Activated naive CD4-positive, alpha-beta T cell treated with anti-CD3 and anti-CD28 coated beads for 36 hours (primary cell): ENCODE measurements at regions of chr2 and their contacts with region 1.

Region 1: GRCh38 chr2:73828818-73829570 is at the start of gene STAMBP:
- DNase-seq: peak; percentile 96
- H3K4me3 Mint-ChIP-seq: peak within 1 kb of the TSS; percentile 94
- H3K27ac Mint-ChIP-seq: peak within 1 kb of the TSS; percentile 94
- H3K4me1 Mint-ChIP-seq: peaks cover 43% of the 10 kb centered on the region
- H3K27me3 Mint-ChIP-seq: no peaks in the 10 kb centered on the region
- total RNA-seq, gene STAMBP: 80.5 to 80.7 TPM

Region 2: DNA sequence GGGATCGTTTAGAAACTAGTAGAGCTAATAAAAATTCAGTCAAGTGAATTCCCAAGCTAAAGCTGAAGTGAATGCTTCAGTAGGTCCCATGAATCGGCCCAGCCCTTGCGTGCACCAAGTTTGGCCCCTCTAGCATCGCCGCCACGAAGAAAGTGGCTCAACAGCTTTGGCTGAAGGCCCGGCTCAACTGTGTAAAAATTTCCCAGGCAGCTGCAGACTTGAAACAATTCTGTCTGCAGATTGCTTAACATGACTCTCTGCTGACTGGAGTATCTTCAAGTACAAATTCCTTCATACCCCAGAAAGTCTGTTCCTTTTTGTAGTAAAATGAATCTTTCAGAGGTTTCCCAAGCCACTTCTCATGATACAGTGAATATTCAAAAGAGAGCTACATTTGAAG is 410.7 kb before region 1 on chr2:
- CTCF ChIA-PET with region 1: no interaction called
- intact Hi-C with region 1: no loop called
- DNase-seq: no peak
- H3K4me3 Mint-ChIP-seq: no peak overlapping the region
- H3K27ac Mint-ChIP-seq: no peak overlapping the region
- H3K4me1 Mint-ChIP-seq: peaks cover 7% of the 10 kb centered on the region
- H3K27me3 Mint-ChIP-seq: no peaks in the 10 kb centered on the region

Region 3: DNA sequence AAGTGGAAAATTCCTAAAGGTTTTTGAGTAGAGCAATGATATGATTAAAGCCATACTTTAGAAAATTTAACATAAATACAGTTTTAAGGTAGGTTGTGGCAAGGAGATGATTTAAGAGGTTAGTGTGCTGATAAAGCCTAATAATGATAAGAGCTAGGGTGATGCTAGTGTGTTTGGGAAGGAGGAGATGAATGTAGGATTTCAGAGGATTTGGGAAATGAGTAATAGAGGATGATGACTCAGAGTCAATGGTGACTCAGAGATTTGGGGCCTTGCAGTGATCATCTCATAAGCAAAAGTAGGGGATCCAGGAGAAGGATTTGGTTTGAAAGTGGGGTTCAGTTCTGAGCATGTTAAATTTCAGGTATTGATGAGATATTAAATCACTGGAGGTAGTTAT is 23.0 kb after region 1 on chr2:
- CTCF ChIA-PET with region 1: interaction called, 8 read pairs
- intact Hi-C with region 1: loop called (anchors 1 kb)
- DNase-seq: no peak
- H3K4me3 Mint-ChIP-seq: no peak overlapping the region
- H3K27ac Mint-ChIP-seq: no peak overlapping the region
- H3K4me1 Mint-ChIP-seq: peaks cover 5% of the 10 kb centered on the region
- H3K27me3 Mint-ChIP-seq: no peaks in the 10 kb centered on the region

Region 4: DNA sequence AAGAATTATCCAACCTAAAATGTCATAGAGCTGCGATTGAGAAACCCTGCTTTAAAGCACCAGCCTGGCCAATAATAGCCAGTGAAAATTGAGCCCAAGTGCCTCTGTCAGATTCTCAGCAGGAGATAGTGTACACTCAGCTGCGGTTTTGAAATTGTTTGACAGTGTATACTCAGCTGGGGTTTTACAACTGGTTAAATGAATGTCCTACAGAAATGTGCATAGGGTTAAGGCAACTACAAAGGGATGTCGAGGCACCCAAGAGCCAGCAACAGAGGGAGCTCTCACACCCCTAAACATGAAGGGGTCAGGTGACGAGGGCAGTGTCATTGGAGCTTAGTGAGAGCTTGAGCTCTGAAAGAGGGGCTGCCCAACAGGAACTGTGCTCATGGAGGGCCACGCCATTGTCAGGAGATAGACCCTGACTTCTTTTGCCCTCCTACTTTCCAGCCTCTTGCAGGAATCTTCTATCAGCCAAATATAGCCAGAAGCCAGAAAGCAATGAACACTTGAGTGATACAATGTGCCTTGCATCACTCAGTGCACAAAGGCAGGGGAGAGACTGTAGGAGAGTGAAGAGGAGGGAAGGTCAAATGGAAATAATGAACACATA is 79.0 kb after region 1 on chr2:
- CTCF ChIA-PET with region 1: interaction called, 12 read pairs
- intact Hi-C with region 1: loop called (anchors 1 kb)
- DNase-seq: peak; percentile 79
- H3K4me3 Mint-ChIP-seq: no peak overlapping the region
- H3K27ac Mint-ChIP-seq: no peak overlapping the region
- H3K4me1 Mint-ChIP-seq: peaks cover 5% of the 10 kb centered on the region
- H3K27me3 Mint-ChIP-seq: no peaks in the 10 kb centered on the region

Region 5: DNA sequence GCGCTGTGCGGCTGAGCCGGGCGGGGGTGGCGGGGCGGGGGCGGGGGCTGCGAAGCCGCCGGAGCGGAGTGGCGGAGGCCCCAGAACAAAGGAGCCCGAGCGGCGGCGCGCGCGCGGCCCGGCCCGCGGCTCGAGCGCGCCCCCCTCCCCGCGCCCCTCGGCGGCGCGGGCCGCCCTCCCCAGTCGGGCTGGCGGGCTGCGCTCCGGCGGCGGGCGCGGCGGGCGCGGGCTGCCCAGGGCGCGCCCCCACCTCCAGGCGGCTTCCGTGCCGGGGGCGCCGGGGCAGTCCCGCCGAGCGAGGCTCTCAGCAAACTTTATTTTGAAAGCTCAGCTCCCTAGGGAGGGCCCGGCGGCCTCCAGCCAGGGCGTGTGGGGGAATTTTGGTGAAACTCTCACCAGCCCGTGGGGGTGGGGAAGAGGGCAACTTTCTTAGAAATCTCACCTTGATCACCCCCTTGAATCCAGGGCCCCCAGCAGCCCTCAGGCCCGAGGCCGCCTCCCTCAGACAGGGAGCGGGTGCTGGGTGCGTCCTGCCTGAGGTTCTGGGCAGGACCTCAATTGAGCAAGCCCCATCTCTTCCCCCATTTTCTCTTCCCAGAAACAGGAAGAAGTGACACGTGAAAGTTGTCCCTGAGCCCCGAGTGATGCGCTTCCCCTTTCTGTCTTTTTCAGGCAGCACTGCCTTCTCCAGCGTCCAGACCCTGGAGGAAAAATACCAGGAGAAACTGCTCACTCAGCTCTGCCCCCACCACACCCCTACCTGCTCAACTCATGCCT is 156.5 kb after region 1 on chr2:
- CTCF ChIA-PET with region 1: interaction called, 22 read pairs
- intact Hi-C with region 1: loop called (anchors 1 kb)
- DNase-seq: peak; percentile 77
- H3K4me3 Mint-ChIP-seq: peak overlapping the region; percentile 80
- H3K27ac Mint-ChIP-seq: peak overlapping the region; percentile 90
- H3K4me1 Mint-ChIP-seq: peaks cover 64% of the 10 kb centered on the region
- H3K27me3 Mint-ChIP-seq: no peaks in the 10 kb centered on the region

Region 6: DNA sequence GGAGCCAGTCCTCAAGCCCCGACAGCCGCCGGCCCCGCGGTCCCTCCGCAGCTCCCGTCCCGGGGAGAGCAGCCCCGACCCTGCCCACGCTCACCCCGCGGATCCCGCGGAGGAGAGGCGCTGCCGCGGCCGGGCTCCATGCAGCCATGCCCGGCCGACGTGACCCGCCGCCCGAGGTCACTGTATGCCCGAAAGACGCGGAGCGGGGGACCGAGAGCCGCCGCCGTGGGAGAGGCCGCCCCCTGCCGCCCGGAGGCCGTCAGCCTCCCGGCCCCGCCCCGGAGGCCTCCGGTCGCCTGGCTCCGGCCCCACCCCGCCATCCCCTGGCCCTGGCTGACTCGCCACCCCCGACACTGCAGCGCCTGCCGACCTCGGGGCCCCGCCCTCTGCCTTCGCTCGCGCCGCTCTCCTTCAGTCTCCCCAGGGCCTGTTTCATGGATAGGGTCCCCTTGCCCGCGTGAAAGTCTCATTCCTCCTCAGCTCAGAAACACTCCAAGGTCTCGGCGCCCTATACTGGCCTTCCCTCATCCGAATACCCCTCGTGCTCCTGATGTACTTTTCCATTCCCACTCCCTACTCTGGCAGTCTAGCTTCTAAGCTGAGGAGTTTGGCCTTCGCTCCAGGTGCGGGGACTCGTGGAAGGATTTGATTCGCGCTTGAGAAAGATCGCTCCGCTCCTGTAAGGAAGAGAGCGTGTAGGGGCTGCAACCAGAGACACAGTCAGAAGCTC is 318.9 kb after region 1 on chr2 and contains the start of gene BOLA3:
- CTCF ChIA-PET with region 1: interaction called, 66 read pairs
- intact Hi-C with region 1: loop called (anchors 1 kb)
- DNase-seq: peak; percentile 90
- H3K4me3 Mint-ChIP-seq: no peak within 1 kb of the TSS
- H3K27ac Mint-ChIP-seq: no peak within 1 kb of the TSS
- H3K4me1 Mint-ChIP-seq: peaks cover 4% of the 10 kb centered on the region
- H3K27me3 Mint-ChIP-seq: no peaks in the 10 kb centered on the region
- total RNA-seq, gene BOLA3: 103 to 112 TPM

Region 7: GRCh38 chr2:74250189-74250631 is 421.2 kb after region 1 on chr2:
- CTCF ChIA-PET with region 1: no interaction called
- intact Hi-C with region 1: loop called (anchors 10 kb)
- DNase-seq: peak; percentile 68
- H3K4me3 Mint-ChIP-seq: no peak overlapping the region
- H3K27ac Mint-ChIP-seq: no peak overlapping the region
- H3K4me1 Mint-ChIP-seq: peaks cover 2% of the 10 kb centered on the region
- H3K27me3 Mint-ChIP-seq: no peaks in the 10 kb centered on the region